MCF 10A (cell line): ENCODE measurements at regions of chr10 and their contacts with region 1.

Region 1: GRCh38 chr10:103659674-103660363 is 166.3 kb downstream of the NEURL1 start:
- DNase-seq: peak; percentile 57
- H3K4me3 Mint-ChIP-seq: peak overlapping the region; percentile 72
- H3K27ac Mint-ChIP-seq: peak overlapping the region; percentile 61
- H3K4me1 Mint-ChIP-seq: no peaks in the 10 kb centered on the region
- H3K27me3 Mint-ChIP-seq: no peaks in the 10 kb centered on the region
- CTCF ChIP-seq: no peak

Region 2: DNA sequence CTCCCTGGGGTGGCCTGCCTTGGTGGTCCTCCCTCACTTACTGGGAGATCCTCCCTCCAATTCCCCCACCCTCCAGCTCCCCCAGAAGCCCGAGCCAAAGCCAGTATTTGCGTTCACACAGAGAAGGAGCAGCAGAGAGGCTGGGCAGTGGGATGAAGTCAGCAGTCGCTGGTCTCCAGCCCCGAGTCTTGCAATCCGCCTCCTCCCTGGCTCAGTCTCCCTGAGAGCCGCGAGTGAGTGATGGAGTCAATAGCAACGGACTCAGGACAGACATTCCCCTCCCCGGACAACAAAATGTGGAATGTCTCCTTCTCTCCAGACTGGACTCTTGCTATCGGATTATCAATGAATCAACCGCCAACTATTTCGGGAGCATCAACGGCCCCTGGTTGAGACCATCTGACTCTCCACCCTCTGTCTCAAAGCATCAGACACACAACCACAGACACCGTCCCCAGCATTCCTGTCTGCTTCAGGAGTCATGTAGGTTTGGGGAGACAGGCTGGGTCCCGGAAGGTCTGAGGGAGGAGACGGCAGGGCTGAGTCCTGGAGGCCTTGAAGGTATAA is 17.1 kb after region 1 on chr10:
- CTCF ChIA-PET with region 1: interaction called, 3 read pairs
- POLR2A ChIA-PET with region 1: interaction called, 3 read pairs
- intact Hi-C with region 1: loop called (anchors 1 kb)
- DNase-seq: no peak
- H3K4me3 Mint-ChIP-seq: no peak overlapping the region
- H3K27ac Mint-ChIP-seq: no peak overlapping the region
- H3K4me1 Mint-ChIP-seq: peaks cover 13% of the 10 kb centered on the region
- H3K27me3 Mint-ChIP-seq: no peaks in the 10 kb centered on the region
- CTCF ChIP-seq: no peak